ENCODE measurements at regions of chr10 and their contacts with region 1.

Region 1: GRCh38 chr10:84613336-84614021 is 285.1 kb downstream of the CCSER2 start:
- DNase-seq: peak; percentile 75
- ATAC-seq: peak; percentile 99
- H3K4me3 Mint-ChIP-seq: no peak overlapping the region
- H3K27ac Mint-ChIP-seq: peak overlapping the region; percentile 64; the same call in 1 of the 2 replicates
- H3K4me1 Mint-ChIP-seq: peaks cover 18% of the 10 kb centered on the region
- H3K27me3 Mint-ChIP-seq: no peaks in the 10 kb centered on the region
- CTCF ChIP-seq: peak; percentile 22; the same call in 1 of the 2 replicates

Region 2: DNA sequence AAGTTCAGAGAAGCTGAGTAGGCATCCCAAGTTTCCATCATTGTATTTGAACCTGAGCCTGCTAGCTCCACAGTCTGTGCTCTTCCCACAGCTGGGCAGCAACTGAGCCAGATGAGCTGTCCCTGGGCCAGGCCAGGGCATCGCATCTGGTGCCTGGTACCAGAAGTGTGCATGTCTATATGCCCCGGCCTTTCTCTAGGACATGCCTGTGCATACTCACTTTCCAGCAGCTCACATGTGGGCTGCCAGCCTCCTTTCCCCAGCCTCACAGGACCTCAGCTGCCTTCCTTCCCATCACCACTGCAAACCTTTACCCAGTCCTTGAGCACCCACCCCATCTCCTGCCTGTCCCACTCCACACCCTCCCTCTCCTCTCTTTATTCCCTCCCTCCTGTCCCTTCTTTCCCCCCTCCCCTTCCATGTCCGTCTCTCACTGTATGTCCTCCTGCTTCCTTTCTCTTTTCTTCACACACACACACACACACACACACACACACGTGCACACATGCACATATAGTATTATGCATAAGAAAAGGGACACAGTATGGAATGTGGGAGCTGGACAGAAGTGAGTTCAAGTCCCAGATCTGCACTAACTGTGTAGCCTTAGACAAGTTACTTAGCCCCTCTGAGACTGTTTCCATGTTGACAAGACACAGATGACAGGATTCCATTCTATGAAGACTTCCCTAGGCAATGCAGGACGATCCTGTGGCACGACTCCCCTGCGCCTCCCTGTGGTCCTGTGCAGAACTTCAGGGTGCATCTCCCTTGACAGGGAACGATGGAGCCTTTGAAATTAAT is 408.2 kb before region 1 on chr10:
- CTCF ChIA-PET with region 1: no interaction called
- POLR2A ChIA-PET with region 1: no interaction called
- DNase-seq: peak; percentile 82
- ATAC-seq: peak; percentile 80
- H3K4me3 Mint-ChIP-seq: no peak overlapping the region
- H3K27ac Mint-ChIP-seq: no peak overlapping the region
- H3K4me1 Mint-ChIP-seq: no peaks in the 10 kb centered on the region
- H3K27me3 Mint-ChIP-seq: no peaks in the 10 kb centered on the region
- CTCF ChIP-seq: peak; percentile 75

Region 3: DNA sequence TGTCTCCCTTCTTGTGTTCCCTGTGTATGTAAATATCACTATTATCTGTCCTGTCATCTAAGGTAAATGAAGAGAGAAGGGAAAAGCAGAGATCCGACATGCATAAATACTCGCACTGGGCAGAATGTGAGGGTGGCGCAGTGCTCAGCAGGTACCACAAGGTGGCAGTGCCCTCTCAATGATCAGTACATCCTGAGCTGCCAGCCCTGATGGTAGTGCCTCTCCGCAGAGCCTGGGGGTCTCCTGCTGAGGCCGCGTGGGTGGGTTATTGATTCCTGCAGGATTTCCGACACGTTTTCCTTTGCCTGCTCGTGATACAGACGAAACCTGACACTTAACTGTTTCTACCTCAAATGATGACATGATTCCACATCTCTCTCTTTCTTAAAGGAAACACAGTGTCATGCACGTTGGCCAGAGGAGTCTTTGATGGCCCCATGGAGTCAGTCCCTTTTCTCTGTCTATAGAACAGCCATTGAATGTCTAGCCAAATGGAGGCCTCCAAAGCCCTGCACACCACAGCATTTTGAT is 348.8 kb before region 1 on chr10:
- CTCF ChIA-PET with region 1: interaction called, 11 read pairs
- POLR2A ChIA-PET with region 1: no interaction called
- DNase-seq: peak; percentile 84
- ATAC-seq: peak; percentile 95
- H3K4me3 Mint-ChIP-seq: no peak overlapping the region
- H3K27ac Mint-ChIP-seq: no peak overlapping the region
- H3K4me1 Mint-ChIP-seq: peaks cover 13% of the 10 kb centered on the region
- H3K27me3 Mint-ChIP-seq: peaks cover 10% of the 10 kb centered on the region
- CTCF ChIP-seq: peak; percentile 78

Region 4: DNA sequence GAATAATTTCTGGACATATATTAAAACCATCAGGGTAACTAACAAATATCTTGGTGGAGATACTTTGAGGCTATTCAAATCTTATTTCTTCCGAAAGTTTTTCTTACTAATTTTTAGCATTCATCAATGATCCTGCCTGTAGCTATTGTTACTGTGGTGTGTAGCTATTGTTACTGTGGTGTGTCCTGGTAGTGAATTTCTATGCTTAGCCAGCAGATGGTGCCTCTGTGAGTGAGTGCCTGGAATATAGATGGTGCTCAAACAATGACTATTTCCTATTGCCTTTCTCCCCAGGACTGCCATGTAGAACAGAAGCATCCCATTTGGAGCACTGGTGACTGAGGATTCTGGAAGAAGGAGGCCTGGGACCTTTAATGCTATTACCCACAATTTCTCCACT is 39.4 kb before region 1 on chr10:
- CTCF ChIA-PET with region 1: interaction called, 30 read pairs
- POLR2A ChIA-PET with region 1: no interaction called
- DNase-seq: no peak
- ATAC-seq: peak; percentile 98
- H3K4me3 Mint-ChIP-seq: no peak overlapping the region
- H3K27ac Mint-ChIP-seq: no peak overlapping the region
- H3K4me1 Mint-ChIP-seq: peaks cover 1% of the 10 kb centered on the region; the same call in 1 of the 2 replicates
- H3K27me3 Mint-ChIP-seq: no peaks in the 10 kb centered on the region
- CTCF ChIP-seq: no peak

Region 5: DNA sequence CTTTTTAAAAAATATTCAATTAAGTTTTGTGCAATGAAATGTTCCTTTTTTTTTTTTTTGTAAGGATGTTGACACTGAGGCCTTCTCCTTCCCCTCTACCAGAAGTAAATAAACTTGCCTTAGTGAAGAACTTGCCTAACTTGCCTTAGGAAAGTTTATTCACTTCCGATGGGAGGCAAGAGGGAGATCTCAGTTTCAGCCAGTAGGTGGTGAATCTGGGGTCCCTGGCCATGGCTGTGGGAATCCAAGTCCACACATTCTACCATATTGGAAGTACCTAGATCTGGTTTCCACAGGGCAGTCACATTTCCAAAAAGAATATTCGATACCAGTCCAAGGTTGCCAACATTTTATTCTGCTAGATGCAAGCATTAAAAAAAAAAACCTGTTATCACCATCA is 14.2 kb before region 1 on chr10:
- CTCF ChIA-PET with region 1: interaction called, 36 read pairs
- POLR2A ChIA-PET with region 1: no interaction called
- DNase-seq: no peak
- ATAC-seq: peak; percentile 36; the same call in 1 of the 2 replicates
- H3K4me3 Mint-ChIP-seq: no peak overlapping the region
- H3K27ac Mint-ChIP-seq: no peak overlapping the region
- H3K4me1 Mint-ChIP-seq: peaks cover 6% of the 10 kb centered on the region
- H3K27me3 Mint-ChIP-seq: no peaks in the 10 kb centered on the region
- CTCF ChIP-seq: no peak

Region 6: DNA sequence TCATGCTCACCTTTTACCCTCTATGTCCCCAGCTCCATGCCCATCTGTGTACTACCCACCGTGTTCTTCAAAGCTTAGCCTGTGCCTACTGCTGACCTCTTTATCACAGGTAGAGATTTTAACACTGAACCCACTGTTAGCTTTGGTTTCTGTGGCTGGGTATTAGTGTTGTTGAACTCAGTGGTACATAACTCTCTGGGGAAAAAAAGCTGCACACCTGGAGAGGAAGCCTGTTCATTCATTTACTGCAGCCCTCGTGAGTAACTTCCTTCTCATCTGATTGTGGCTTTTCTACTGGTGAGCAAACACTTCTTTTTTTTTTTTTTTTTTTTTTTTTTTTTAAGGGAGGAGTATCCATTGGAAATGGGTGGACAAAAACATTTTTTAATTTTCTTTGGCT is 41.2 kb after region 1 on chr10:
- CTCF ChIA-PET with region 1: interaction called, 10 read pairs
- POLR2A ChIA-PET with region 1: no interaction called
- DNase-seq: no peak
- ATAC-seq: no peak
- H3K4me3 Mint-ChIP-seq: no peak overlapping the region
- H3K27ac Mint-ChIP-seq: no peak overlapping the region
- H3K4me1 Mint-ChIP-seq: no peaks in the 10 kb centered on the region
- H3K27me3 Mint-ChIP-seq: no peaks in the 10 kb centered on the region; the same call in 1 of the 2 replicates
- CTCF ChIP-seq: no peak

Region 7: DNA sequence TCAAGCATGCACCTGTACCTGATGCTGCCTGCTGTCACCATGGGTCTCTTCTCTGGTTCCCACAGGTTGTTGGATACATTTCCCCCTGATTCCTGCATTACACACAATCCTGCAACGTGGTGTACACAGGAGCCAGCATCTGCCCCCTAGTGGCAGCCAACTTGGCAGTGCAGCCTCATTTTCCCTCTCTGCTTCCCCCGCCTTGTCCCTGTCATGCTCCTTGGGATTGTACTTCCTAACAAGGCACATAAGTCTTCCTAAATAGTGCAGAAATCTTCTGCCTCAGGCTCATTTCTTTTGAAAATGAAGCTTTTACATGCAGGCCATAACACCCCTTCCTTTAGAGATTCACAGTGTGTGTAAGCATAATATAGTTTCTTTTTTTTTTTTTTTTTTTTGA is 102.4 kb after region 1 on chr10:
- CTCF ChIA-PET with region 1: interaction called, 67 read pairs
- POLR2A ChIA-PET with region 1: interaction called, 3 read pairs
- DNase-seq: peak; percentile 69
- ATAC-seq: peak; percentile 100
- H3K4me3 Mint-ChIP-seq: no peak overlapping the region
- H3K27ac Mint-ChIP-seq: no peak overlapping the region
- H3K4me1 Mint-ChIP-seq: no peaks in the 10 kb centered on the region
- H3K27me3 Mint-ChIP-seq: no peaks in the 10 kb centered on the region
- CTCF ChIP-seq: peak; percentile 78; the same call in 1 of the 2 replicates

Region 8: GRCh38 chr10:84762754-84763394 is 149.4 kb after region 1 on chr10:
- CTCF ChIA-PET with region 1: interaction called, 44 read pairs
- POLR2A ChIA-PET with region 1: no interaction called
- DNase-seq: peak; percentile 30
- ATAC-seq: peak; percentile 87
- H3K4me3 Mint-ChIP-seq: peak overlapping the region; percentile 59
- H3K27ac Mint-ChIP-seq: no peak overlapping the region; the same call in 1 of the 2 replicates
- H3K4me1 Mint-ChIP-seq: peaks cover 13% of the 10 kb centered on the region
- H3K27me3 Mint-ChIP-seq: peaks cover 3% of the 10 kb centered on the region; the same call in 1 of the 2 replicates
- CTCF ChIP-seq: no peak

Measured in WTC11 (cell line).